ENCODE measurements at regions of chr19 and their contacts with region 1.

Region 1: GRCh38 chr19:49570138-49570856 is 10.1 kb downstream of the NOSIP start:
- H3K4me3 Mint-ChIP-seq: no peak overlapping the region
- H3K27ac Mint-ChIP-seq: peak overlapping the region; percentile 28
- H3K4me1 Mint-ChIP-seq: peaks cover 37% of the 10 kb centered on the region
- H3K27me3 Mint-ChIP-seq: no peaks in the 10 kb centered on the region

Region 2: GRCh38 chr19:49473868-49474544 is 96.3 kb before region 1 on chr19 and contains the start of gene FLT3LG:
- intact Hi-C with region 1: loop called (anchors 1 kb)
- H3K4me3 Mint-ChIP-seq: peak within 1 kb of the TSS; percentile 93
- H3K27ac Mint-ChIP-seq: peak within 1 kb of the TSS; percentile 90
- H3K4me1 Mint-ChIP-seq: peaks cover 55% of the 10 kb centered on the region
- H3K27me3 Mint-ChIP-seq: peaks cover 17% of the 10 kb centered on the region

Region 3: GRCh38 chr19:49506575-49507105 is 63.7 kb before region 1 on chr19:
- intact Hi-C with region 1: loop called (anchors 1 kb)
- H3K4me3 Mint-ChIP-seq: no peak overlapping the region
- H3K27ac Mint-ChIP-seq: peak overlapping the region; percentile 73
- H3K4me1 Mint-ChIP-seq: peaks cover 47% of the 10 kb centered on the region
- H3K27me3 Mint-ChIP-seq: peaks cover 2% of the 10 kb centered on the region

Measured in dendritic cell treated with granulocyte-macrophage colony-stimulating factor and Interleukin-4, amounts not matched to agents 40 ng/mL and 50 ng/mL, for 4 days (primary cell).